AG04450 (cell line): ENCODE measurements at regions of chr10 and their contacts with region 1.

Region 1: GRCh38 chr10:72048450-72049124 is 39.8 kb downstream of the SPOCK2 start:
- DNase-seq: peak; percentile 83
- H3K4me3 ChIP-seq: no peak overlapping the region
- H3K27ac ChIP-seq: no peak overlapping the region
- H3K27me3 ChIP-seq: peaks cover 4% of the 10 kb centered on the region
- CTCF ChIP-seq: peak; percentile 100

Region 2: DNA sequence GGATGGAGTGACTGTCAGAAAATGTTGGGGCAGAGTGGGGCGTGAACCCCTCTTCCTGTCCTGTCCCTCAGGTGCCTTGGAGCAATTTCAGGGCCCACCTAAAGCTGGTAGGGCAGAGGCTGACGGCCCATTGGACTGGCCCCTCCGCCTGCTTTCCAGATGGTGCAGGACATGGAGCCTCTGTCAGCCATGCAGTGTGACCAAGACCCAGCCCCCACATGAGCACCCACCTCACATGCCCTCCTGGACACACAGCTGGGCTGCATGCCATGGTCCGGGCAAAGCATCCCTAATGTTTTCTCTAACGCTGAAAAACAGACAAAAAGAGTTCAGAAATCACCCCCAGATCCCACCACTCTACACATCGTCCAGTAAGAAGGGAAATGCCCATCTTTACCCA is 146.2 kb before region 1 on chr10:
- CTCF ChIA-PET with region 1: interaction called, 168 read pairs
- POLR2A ChIA-PET with region 1: no interaction called
- DNase-seq: no peak
- H3K4me3 ChIP-seq: no peak overlapping the region
- H3K27ac ChIP-seq: no peak overlapping the region
- H3K27me3 ChIP-seq: peaks cover 5% of the 10 kb centered on the region
- CTCF ChIP-seq: no peak

Region 3: GRCh38 chr10:71964669-71965515 is 83.7 kb before region 1 on chr10:
- CTCF ChIA-PET with region 1: interaction called, 13 read pairs
- POLR2A ChIA-PET with region 1: no interaction called
- DNase-seq: no peak
- H3K4me3 ChIP-seq: peak overlapping the region; percentile 90
- H3K27ac ChIP-seq: peak overlapping the region; percentile 21
- H3K27me3 ChIP-seq: no peaks in the 10 kb centered on the region
- CTCF ChIP-seq: no peak

Region 4: GRCh38 chr10:72009411-72010081 is 39.0 kb before region 1 on chr10:
- CTCF ChIA-PET with region 1: interaction called, 18 read pairs
- POLR2A ChIA-PET with region 1: no interaction called
- DNase-seq: peak; percentile 85
- H3K4me3 ChIP-seq: peak overlapping the region; percentile 25; the same call in 1 of the 2 replicates
- H3K27ac ChIP-seq: peak overlapping the region; percentile 99
- H3K27me3 ChIP-seq: no peaks in the 10 kb centered on the region
- CTCF ChIP-seq: no peak

Region 5: DNA sequence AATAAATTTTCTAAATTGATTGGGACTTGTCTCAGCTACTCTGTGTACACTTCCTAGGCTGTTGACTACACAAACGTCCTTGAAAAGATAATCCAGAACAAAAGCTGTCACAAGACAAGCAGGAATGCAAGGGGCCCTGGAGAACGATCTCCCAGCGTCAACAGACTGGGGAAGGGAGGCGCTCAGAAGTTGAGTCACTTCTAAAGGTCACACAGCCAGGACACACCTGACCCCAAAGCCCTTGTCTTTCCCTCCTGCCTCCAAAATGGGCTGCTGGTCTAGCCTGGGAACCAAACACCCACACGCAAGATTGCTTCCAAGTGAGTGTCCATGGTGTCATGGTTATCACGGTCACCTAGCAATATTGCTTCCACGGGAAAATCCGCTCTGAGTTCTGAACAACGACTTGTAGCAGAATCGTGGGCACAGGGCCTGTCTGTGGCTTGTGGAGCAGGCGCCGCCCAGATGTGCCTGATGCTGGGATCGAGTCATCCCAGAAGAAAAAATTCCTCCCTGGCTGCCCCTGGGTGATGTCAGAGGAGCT is 10.1 kb before region 1 on chr10:
- CTCF ChIA-PET with region 1: interaction called, 40 read pairs
- POLR2A ChIA-PET with region 1: no interaction called
- DNase-seq: no peak
- H3K4me3 ChIP-seq: no peak overlapping the region
- H3K27ac ChIP-seq: no peak overlapping the region
- H3K27me3 ChIP-seq: no peaks in the 10 kb centered on the region
- CTCF ChIP-seq: no peak

Region 6: GRCh38 chr10:72114706-72115450 is 66.3 kb after region 1 on chr10:
- CTCF ChIA-PET with region 1: interaction called, 13 read pairs
- POLR2A ChIA-PET with region 1: no interaction called
- DNase-seq: no peak
- H3K4me3 ChIP-seq: no peak overlapping the region
- H3K27ac ChIP-seq: no peak overlapping the region
- H3K27me3 ChIP-seq: no peaks in the 10 kb centered on the region
- CTCF ChIP-seq: no peak

Region 7: GRCh38 chr10:72137583-72137982 is 89.0 kb after region 1 on chr10:
- CTCF ChIA-PET with region 1: no interaction called
- POLR2A ChIA-PET with region 1: no interaction called
- DNase-seq: no peak
- H3K4me3 ChIP-seq: no peak overlapping the region
- H3K27ac ChIP-seq: no peak overlapping the region
- H3K27me3 ChIP-seq: no peaks in the 10 kb centered on the region
- CTCF ChIP-seq: no peak

Region 8: GRCh38 chr10:72229261-72230251 is 181.0 kb after region 1 on chr10:
- CTCF ChIA-PET with region 1: interaction called, 18 read pairs
- POLR2A ChIA-PET with region 1: no interaction called
- DNase-seq: no peak
- H3K4me3 ChIP-seq: no peak overlapping the region
- H3K27ac ChIP-seq: no peak overlapping the region
- H3K27me3 ChIP-seq: no peaks in the 10 kb centered on the region
- CTCF ChIP-seq: no peak